Heart right ventricle (tissue), 16 donors: ENCODE measurements at regions of chr9 and their contacts with region 1.

Region 1: GRCh38 chr9:5389109-5389732 is 48.5 kb downstream of the PLGRKT start:
- DNase-seq: no peak
- ATAC-seq: no peak
- H3K4me3 ChIP-seq: no peak overlapping the region
- H3K27ac ChIP-seq: no peak overlapping the region
- H3K4me1 ChIP-seq: peaks cover 0 to 10% (median 0%) of the 10 kb centered on the region in 9 donors
- H3K27me3 ChIP-seq: no peaks in the 10 kb centered on the region
- CTCF ChIP-seq: no peak

Region 2: DNA sequence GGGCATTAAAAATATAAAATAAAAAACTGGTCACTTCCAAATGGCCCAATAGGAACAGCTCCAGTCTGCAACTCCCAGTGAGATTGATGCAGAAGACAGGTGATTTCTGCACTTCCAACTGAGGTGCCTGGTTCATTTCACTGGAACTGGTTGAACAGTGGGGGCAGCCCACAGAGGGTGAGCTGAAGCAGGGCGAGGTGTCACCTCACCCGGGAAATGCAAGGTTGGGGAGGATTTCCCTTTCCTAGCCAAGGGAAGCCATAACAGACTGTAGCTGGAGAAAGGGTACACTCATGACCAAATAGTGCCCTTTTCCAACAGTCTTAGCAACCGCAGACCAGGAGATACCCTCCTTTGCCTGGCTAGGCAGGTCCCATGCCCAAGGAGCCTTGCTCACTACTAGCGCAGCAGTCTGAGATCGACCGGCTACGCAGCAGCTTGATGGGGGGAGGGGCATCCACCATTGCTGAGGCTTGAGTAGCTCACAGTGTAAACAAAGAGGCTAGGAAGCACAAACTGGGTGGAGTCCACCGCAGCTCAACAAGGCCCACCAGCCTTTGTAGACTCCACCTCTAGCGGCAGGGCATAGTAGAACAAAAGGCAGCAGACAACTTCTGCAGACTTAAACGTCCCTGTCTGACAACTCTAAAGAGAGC is 62.2 kb before region 1 on chr9:
- intact Hi-C with region 1: loop called in 1 of 10 experiments (anchors 10 kb)
- DNase-seq: no peak
- ATAC-seq: no peak
- H3K4me3 ChIP-seq: no peak overlapping the region
- H3K27ac ChIP-seq: no peak overlapping the region
- H3K4me1 ChIP-seq: no peaks in the 10 kb centered on the region
- H3K27me3 ChIP-seq: no peaks in the 10 kb centered on the region
- CTCF ChIP-seq: no peak

Region 3: GRCh38 chr9:5364294-5365024 is 24.8 kb before region 1 on chr9:
- intact Hi-C with region 1: loop called in 1 of 10 experiments (anchors 1 kb)
- DNase-seq: no peak
- ATAC-seq: no peak
- H3K4me3 ChIP-seq: no peak overlapping the region
- H3K27ac ChIP-seq: no peak overlapping the region
- H3K4me1 ChIP-seq: peaks cover 0 to 13% (median 0%) of the 10 kb centered on the region in 9 donors
- H3K27me3 ChIP-seq: no peaks in the 10 kb centered on the region
- CTCF ChIP-seq: no peak